ENCODE measurements at regions of chr16 and their contacts with region 1.

Region 1: DNA sequence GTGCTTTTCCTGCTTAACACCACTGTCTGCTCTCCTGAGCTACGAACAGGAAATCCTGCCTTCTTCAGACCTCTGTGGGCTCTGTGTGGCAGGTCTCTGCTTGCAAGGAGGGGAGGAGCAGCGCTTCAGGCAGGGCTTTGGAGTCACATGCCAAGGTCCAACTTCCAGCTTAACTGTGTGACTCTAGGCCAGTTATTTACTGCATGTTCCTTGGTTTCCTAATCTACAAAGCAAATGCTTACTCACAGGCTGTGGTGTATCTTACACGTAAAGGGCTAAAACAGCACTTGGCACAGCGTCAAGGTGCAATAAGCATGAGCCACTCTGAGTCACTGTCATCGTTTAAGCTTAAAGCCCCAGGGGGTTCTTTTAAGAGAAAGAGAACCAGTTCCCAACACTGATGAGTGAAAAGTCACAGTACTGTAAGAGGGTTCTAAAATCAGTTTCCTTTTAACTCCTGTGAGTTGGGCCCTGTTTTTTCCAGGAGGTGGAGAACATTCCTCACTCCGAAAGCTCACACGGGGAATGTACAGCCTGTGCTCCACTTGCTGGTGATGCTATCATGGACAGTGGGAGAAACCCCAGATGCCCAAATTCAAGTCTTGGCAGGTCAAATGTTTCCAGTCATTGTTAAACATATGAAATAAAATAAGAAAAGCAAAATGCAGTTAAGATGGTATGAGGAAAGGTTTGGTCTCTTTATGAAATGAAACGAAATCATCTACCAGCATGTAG is 54.1 kb upstream of the BCAR1 start:
- DNase-seq: peak; percentile 90 to 95
- H3K4me3 ChIP-seq: no peak overlapping the region
- H3K4me3 Mint-ChIP-seq: peak overlapping the region; percentile 58
- H3K27ac Mint-ChIP-seq: peak overlapping the region; percentile 88
- H3K4me1 ChIP-seq: peaks cover 65% of the 10 kb centered on the region
- H3K4me1 Mint-ChIP-seq: peaks cover 49% of the 10 kb centered on the region
- H3K27me3 ChIP-seq: no peaks in the 10 kb centered on the region
- H3K27me3 Mint-ChIP-seq: no peaks in the 10 kb centered on the region
- CTCF ChIP-seq: no peak

Region 2: DNA sequence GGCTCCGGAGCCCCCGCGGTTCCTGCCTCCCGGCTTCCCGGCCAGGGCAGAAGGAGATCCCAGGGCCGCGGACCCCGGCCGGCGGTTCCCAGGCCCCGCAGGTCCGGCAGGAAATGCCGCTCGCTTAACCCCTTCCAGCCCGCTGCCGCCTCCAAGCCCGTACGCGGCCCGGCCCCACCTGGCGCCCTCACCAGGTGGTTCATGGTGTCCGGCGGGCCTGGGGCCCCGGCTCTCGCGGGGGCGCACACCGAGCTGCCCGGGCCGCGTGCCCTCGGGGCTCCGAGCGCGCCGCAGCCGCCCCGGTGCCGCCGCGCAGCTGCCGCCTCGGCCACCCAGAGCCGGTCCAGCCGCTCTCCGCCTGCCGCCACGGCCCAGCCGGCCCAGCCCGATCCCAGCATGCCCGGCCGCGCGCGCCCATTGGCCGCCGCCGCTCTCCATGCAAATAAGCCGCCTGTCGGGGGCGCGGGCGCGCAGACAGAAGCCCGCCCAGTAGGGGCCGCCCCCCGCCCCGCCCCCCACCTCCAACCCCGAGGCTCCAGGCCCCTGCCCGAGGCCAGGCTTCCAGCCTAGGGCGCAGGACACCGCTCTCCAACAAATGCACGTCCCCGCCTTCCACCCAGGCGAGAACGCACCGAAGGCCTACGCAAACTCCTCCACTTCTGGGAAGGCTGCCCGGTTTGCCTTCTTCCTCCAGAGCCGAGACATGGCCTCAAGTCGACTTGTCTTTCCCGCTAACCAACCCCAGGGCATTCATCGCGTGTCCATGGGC is 54.1 kb before region 1 on chr16 and contains the start of gene BCAR1:
- CTCF ChIA-PET with region 1: interaction called, 4 read pairs
- POLR2A ChIA-PET with region 1: interaction called, 5 read pairs
- intact Hi-C with region 1: loop called (anchors 1 kb)
- DNase-seq: peak; percentile 94 to 97
- H3K4me3 ChIP-seq: peak within 1 kb of the TSS; percentile 96
- H3K4me3 Mint-ChIP-seq: peak within 1 kb of the TSS; percentile 96
- H3K27ac Mint-ChIP-seq: peak within 1 kb of the TSS; percentile 89
- H3K4me1 ChIP-seq: peaks cover 67% of the 10 kb centered on the region
- H3K4me1 Mint-ChIP-seq: peaks cover 47% of the 10 kb centered on the region
- H3K27me3 ChIP-seq: no peaks in the 10 kb centered on the region
- H3K27me3 Mint-ChIP-seq: no peaks in the 10 kb centered on the region
- CTCF ChIP-seq: no peak
- total RNA-seq, gene BCAR1: 94.0 and 95.5 TPM in 2 replicates

Region 3: GRCh38 chr16:75265845-75266701 is 39.5 kb before region 1 on chr16:
- CTCF ChIA-PET with region 1: no interaction called
- POLR2A ChIA-PET with region 1: interaction called, 10 read pairs
- intact Hi-C with region 1: loop called (anchors 2 kb)
- DNase-seq: peak; percentile 94 to 96
- H3K4me3 ChIP-seq: peak overlapping the region; percentile 89
- H3K4me3 Mint-ChIP-seq: peak overlapping the region; percentile 82
- H3K27ac Mint-ChIP-seq: peak overlapping the region; percentile 95
- H3K4me1 ChIP-seq: peaks cover 46% of the 10 kb centered on the region
- H3K4me1 Mint-ChIP-seq: peaks cover 21% of the 10 kb centered on the region
- H3K27me3 ChIP-seq: no peaks in the 10 kb centered on the region
- H3K27me3 Mint-ChIP-seq: no peaks in the 10 kb centered on the region
- CTCF ChIP-seq: peak in 1 of 2 experiments; percentile 19

Region 4: GRCh38 chr16:75280331-75280804 is 25.2 kb before region 1 on chr16:
- CTCF ChIA-PET with region 1: no interaction called
- POLR2A ChIA-PET with region 1: no interaction called
- intact Hi-C with region 1: loop called (anchors 2 kb)
- DNase-seq: no peak
- H3K4me3 ChIP-seq: no peak overlapping the region
- H3K4me3 Mint-ChIP-seq: no peak overlapping the region
- H3K27ac Mint-ChIP-seq: peak overlapping the region; percentile 39
- H3K4me1 ChIP-seq: no peaks in the 10 kb centered on the region
- H3K4me1 Mint-ChIP-seq: no peaks in the 10 kb centered on the region
- H3K27me3 ChIP-seq: no peaks in the 10 kb centered on the region
- H3K27me3 Mint-ChIP-seq: no peaks in the 10 kb centered on the region
- CTCF ChIP-seq: no peak

Region 5: GRCh38 chr16:75329947-75330346 is 24.4 kb after region 1 on chr16:
- CTCF ChIA-PET with region 1: no interaction called
- POLR2A ChIA-PET with region 1: no interaction called
- intact Hi-C with region 1: loop called (anchors 1 kb)
- DNase-seq: peak; percentile 11 to 43
- H3K4me3 ChIP-seq: no peak overlapping the region
- H3K4me3 Mint-ChIP-seq: no peak overlapping the region
- H3K27ac Mint-ChIP-seq: no peak overlapping the region
- H3K4me1 ChIP-seq: no peaks in the 10 kb centered on the region
- H3K4me1 Mint-ChIP-seq: no peaks in the 10 kb centered on the region
- H3K27me3 ChIP-seq: no peaks in the 10 kb centered on the region
- H3K27me3 Mint-ChIP-seq: no peaks in the 10 kb centered on the region
- CTCF ChIP-seq: no peak

Region 6: GRCh38 chr16:75376475-75377161 is 71.1 kb after region 1 on chr16:
- CTCF ChIA-PET with region 1: no interaction called
- POLR2A ChIA-PET with region 1: interaction called, 3 read pairs
- intact Hi-C with region 1: loop called (anchors 1 kb)
- DNase-seq: peak; percentile 81 to 82
- H3K4me3 ChIP-seq: no peak overlapping the region
- H3K4me3 Mint-ChIP-seq: peak overlapping the region; percentile 12
- H3K27ac Mint-ChIP-seq: peak overlapping the region; percentile 82
- H3K4me1 ChIP-seq: peaks cover 27% of the 10 kb centered on the region
- H3K4me1 Mint-ChIP-seq: peaks cover 29% of the 10 kb centered on the region
- H3K27me3 ChIP-seq: no peaks in the 10 kb centered on the region
- H3K27me3 Mint-ChIP-seq: no peaks in the 10 kb centered on the region
- CTCF ChIP-seq: no peak

Region 7: DNA sequence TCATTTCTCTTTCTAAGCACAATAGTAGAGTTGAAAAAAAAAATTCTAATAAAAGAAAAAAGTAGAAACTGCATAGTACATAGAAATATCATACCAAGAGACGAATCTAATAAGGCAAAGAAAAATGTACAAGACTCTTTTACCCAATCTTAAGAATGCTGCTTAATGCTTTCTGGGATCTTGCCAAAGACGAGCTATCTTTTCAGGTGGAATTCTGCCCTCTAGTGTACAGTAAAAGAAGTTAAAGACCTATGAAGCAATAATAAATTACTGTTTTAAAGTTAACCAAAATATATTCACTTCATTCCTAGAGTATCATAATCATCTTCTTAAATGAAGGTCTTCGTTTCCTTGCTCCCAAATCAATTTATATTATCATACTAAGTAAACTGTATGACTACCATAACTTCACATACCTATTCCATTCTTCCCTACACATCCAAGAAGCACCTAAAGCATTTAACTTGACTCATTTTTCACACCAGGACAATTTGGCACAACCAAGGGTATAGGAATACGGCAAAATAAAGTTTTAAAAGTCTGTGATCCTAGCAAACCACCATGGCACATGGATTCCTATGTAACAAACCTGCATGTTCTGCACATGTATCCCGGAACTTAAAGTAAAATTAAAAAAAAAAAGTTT is 80.1 kb after region 1 on chr16:
- CTCF ChIA-PET with region 1: interaction called, 7 read pairs
- POLR2A ChIA-PET with region 1: no interaction called
- intact Hi-C with region 1: loop called (anchors 1 kb)
- DNase-seq: peak in 1 of 2 experiments; percentile 37
- H3K4me3 ChIP-seq: no peak overlapping the region
- H3K4me3 Mint-ChIP-seq: no peak overlapping the region
- H3K27ac Mint-ChIP-seq: no peak overlapping the region
- H3K4me1 ChIP-seq: no peaks in the 10 kb centered on the region
- H3K4me1 Mint-ChIP-seq: no peaks in the 10 kb centered on the region
- H3K27me3 ChIP-seq: no peaks in the 10 kb centered on the region
- H3K27me3 Mint-ChIP-seq: no peaks in the 10 kb centered on the region
- CTCF ChIP-seq: peak; percentile 62 to 65

Region 8: GRCh38 chr16:75519881-75520280 is 214.3 kb after region 1 on chr16:
- CTCF ChIA-PET with region 1: no interaction called
- POLR2A ChIA-PET with region 1: no interaction called
- intact Hi-C with region 1: no loop called
- DNase-seq: no peak
- H3K4me3 ChIP-seq: no peak overlapping the region
- H3K4me3 Mint-ChIP-seq: no peak overlapping the region
- H3K27ac Mint-ChIP-seq: no peak overlapping the region
- H3K4me1 ChIP-seq: no peaks in the 10 kb centered on the region
- H3K4me1 Mint-ChIP-seq: peaks cover 7% of the 10 kb centered on the region
- H3K27me3 ChIP-seq: no peaks in the 10 kb centered on the region
- H3K27me3 Mint-ChIP-seq: no peaks in the 10 kb centered on the region
- CTCF ChIP-seq: no peak